ENCODE measurements at regions of chr16 and their contacts with region 1.

Region 1: GRCh38 chr16:68040507-68041288 is 17.6 kb downstream of the DUS2 start:
- DNase-seq: peak; percentile 78
- H3K27ac ChIP-seq: no peak overlapping the region
- CTCF ChIP-seq: peak; percentile 90

Region 2: DNA sequence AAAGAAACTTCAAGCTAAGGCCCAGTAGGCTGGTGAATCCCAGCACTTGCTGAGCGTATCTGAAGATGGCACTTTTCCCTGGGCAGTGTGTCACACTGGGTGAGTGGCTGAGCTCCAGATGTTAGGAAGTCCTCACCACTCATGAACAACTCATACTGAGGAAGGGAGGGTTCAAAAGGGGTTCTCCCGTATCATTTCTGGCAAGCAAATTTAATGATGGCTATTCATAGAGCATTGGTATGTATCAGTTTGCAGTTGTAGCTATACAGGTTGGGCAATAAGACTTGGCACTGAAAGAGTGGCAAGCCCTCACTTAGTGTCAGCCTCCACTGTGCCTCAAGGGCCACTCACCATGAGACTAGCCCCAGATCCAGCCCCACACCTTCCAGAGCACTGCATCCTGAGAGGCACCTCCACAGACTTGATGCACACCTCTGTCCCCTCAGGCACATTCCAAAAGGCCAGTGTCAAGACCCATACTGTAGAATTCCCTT is 332.3 kb before region 1 on chr16:
- CTCF ChIA-PET with region 1: no interaction called
- POLR2A ChIA-PET with region 1: no interaction called
- DNase-seq: no peak
- H3K27ac ChIP-seq: peak overlapping the region; percentile 26; the same call in 1 of the 2 replicates
- CTCF ChIP-seq: no peak

Region 3: GRCh38 chr16:67968400-67969253 is 72.1 kb before region 1 on chr16 and contains the start of gene SLC12A4:
- CTCF ChIA-PET with region 1: no interaction called
- POLR2A ChIA-PET with region 1: no interaction called
- DNase-seq: peak; percentile 92
- H3K27ac ChIP-seq: peak within 1 kb of the TSS; percentile 89
- CTCF ChIP-seq: no peak

Region 4: DNA sequence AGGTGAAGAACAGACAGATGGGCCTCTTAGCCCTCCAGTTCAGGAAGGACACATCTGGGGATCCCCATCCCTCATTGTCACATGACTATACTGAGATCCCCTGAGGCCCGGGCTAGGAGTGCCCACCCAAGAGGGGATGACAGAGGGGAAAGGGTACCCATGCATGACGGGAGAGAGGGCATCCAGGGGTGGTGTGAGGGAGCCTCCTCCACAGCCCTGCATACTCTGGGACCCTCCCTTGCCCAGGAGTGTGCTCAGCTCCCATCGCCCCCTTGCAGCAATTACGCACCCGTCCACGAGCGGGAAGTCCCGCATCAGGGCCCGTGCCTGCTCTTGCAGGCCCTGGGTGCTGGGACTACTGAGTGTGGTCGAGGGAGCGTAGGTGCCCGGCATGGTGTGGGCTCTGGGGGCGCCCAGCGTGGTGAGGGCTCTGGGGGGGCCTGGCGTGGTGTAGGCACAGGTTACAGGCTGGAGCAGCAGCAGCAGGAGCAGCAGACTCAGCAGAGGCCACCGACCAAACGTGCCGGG is 48.0 kb before region 1 on chr16:
- CTCF ChIA-PET with region 1: interaction called, 18 read pairs
- POLR2A ChIA-PET with region 1: no interaction called
- DNase-seq: no peak
- H3K27ac ChIP-seq: no peak overlapping the region
- CTCF ChIP-seq: no peak

Region 5: GRCh38 chr16:68005786-68006286 is 34.9 kb before region 1 on chr16:
- CTCF ChIA-PET with region 1: interaction called, 12 read pairs
- POLR2A ChIA-PET with region 1: no interaction called
- DNase-seq: peak; percentile 33
- H3K27ac ChIP-seq: peak overlapping the region; percentile 77
- CTCF ChIP-seq: no peak

Region 6: GRCh38 chr16:68070806-68071517 is 30.3 kb after region 1 on chr16:
- CTCF ChIA-PET with region 1: no interaction called
- POLR2A ChIA-PET with region 1: no interaction called
- DNase-seq: no peak
- H3K27ac ChIP-seq: peak overlapping the region; percentile 11; the same call in 1 of the 2 replicates
- CTCF ChIP-seq: no peak